Ovary (tissue), 10 donors: ENCODE measurements at regions of chr4 and their contacts with region 1.

Region 1: GRCh38 chr4:88033309-88033708 is 25.9 kb downstream of the PKD2 start:
- DNase-seq: peak in 1 of 5 donors; percentile 51
- H3K4me3 ChIP-seq: no peak overlapping the region
- H3K27ac ChIP-seq: no peak overlapping the region
- H3K4me1 ChIP-seq: no peaks in the 10 kb centered on the region
- H3K27me3 ChIP-seq: no peaks in the 10 kb centered on the region
- CTCF ChIP-seq: peak; percentile 33 to 57 (median 49)
- EP300 ChIP-seq: no peak
- POLR2A ChIP-seq: no peak

Region 2: DNA sequence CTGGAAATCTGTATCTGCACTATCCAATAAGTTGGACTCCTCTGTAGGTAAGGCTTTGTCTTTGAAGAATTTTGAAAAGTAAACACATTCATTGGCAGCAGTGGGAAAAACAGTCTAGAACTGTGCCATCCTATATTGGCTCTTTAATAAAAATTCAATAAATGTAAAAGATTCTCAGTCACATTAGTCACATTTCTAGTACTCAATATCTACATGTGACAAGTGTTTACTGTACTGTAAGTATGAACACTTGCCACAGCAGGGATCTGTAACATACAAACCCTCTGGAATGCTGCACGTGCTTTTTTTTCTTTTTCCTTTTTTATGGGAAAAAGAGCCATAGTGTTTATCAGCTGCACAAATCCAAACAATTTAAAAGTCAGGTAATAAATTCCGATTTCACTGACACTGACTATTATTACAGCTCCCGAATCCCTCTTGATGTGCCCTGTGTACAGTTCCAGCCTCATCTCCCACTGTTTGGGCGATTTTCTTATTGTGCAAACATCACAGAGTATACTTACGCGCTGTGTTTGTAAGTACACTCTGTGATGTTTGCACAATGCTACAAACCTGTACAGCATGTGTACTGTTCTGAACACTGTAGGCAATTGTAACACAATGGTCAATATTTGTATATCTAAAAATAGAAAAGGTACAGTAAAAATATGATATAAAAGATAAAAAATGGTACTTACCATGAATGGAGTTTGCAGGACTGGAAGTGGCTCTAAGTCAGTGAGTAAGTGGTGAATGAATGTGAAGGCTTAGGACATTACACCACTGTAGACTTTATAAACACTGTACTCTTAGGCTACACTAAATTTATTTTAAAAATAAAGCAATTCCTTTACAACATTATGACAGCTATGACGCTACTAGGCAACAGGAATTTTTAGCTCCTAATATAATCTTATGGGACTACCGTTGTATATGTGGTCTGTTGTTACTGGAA is 481.5 kb after region 1 on chr4:
- intact Hi-C with region 1: loop called in 2 of 4 experiments (anchors 10 kb)
- DNase-seq: no peak
- H3K4me3 ChIP-seq: no peak overlapping the region
- H3K27ac ChIP-seq: no peak overlapping the region
- H3K4me1 ChIP-seq: no peaks in the 10 kb centered on the region
- H3K27me3 ChIP-seq: no peaks in the 10 kb centered on the region
- CTCF ChIP-seq: no peak
- EP300 ChIP-seq: no peak
- POLR2A ChIP-seq: no peak